Calu3 (cell line): ENCODE measurements at regions of chr10 and their contacts with region 1.

Region 1: GRCh38 chr10:111137012-111137411 is 60.2 kb downstream of the ADRA2A start:
- DNase-seq: peak; percentile 36
- H3K4me3 Mint-ChIP-seq: peak overlapping the region; percentile 26
- H3K27ac Mint-ChIP-seq: peak overlapping the region; percentile 81
- H3K4me1 Mint-ChIP-seq: peaks cover 13% of the 10 kb centered on the region
- H3K27me3 Mint-ChIP-seq: no peaks in the 10 kb centered on the region
- CTCF ChIP-seq: no peak

Region 2: DNA sequence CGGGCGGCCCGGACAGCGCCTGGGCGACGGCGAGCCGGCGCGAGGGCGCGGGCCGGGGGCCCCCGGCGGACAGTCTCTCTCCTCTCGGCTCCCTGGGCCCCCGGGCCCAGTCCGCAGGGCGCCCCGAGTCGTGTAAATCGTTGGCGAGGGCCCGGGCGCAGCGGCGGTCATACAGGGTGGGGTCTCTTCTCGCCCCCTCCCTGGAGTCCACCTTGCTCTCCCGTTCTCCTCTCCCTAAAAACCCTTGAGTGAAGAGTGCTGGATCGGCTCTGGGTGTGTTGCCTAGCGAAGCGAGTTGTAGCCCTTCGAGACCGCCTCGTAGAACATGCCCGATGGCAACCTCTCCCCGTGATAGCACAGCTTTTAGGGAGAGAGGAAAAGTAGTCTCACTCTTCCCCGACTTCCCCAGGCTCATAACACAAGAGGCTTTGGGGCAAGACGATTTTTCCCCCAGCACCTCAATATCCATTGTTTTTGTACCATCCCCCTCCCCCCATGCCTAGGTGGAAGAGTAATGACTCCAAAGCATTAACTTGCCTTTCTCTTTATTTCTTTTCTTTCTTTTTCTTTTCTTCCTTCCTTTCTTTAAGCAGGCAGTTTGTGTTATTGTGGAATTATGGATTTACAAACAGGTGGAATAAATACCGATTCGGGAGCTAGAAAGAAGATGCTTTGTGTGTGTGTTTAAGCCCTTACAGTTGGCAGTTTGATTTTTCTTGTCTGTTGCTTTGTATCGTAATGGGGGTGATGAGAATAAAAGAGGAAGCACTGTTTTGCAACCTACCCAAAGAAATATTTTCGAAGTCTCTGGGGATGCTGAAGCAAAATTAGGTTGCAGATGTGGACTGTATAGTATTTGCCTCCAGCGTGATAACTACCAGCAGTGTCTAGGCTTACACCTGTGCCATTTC is 216.8 kb before region 1 on chr10:
- CTCF ChIA-PET with region 1: no interaction called
- intact Hi-C with region 1: loop called (anchors 10 kb)
- DNase-seq: peak; percentile 26
- H3K4me3 Mint-ChIP-seq: peak overlapping the region; percentile 94
- H3K27ac Mint-ChIP-seq: peak overlapping the region; percentile 96
- H3K4me1 Mint-ChIP-seq: peaks cover 18% of the 10 kb centered on the region
- H3K27me3 Mint-ChIP-seq: no peaks in the 10 kb centered on the region
- CTCF ChIP-seq: no peak